Activated CD8-positive, alpha-beta T cell treated with anti-CD3 and anti-CD28 coated beads, Interleukin-2, amount 10 ng/mL, durations not matched to agents 7 days and 5 days (primary cell): ENCODE measurements at regions of chr21 and their contacts with region 1.

Region 1: DNA sequence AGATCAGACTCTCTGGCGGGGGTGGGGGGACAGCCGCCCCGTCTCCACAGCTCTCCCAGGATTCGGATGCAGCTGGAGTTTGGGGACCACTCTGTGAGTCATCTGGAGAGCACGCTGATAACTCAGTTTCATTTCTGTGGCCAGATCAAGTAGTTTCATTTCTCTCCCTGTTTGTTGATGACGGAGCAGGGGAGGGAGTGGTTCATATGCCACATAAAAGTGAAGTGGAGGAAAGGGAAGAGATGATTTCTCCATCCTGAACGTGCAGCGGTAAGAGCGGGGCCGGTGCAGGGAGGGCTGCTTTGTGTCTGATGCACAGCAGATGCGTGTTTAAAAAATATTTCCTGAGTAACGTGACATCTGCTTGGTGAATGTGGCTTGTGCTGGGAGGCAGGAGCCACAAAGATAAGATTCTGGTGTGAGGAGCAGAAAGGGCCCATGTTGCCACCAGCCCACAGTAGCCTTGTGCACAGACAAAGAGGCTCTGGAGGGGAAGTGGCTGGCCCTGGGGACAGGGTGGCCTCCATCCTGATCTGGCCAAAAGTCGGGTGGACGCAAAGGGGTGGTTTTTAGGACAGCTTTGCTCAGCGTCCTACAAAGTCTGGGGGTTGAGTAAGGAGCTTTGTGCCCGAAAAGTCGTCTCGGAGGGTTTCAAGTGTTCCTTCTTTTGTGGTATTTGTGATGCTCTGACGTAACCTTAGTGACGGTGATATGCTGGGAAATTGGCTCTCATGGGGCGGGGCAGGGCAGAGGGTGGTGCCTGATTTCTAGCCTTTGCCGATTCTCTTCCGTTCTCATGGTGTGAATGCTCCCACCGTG is at the start of gene MX2:
- DNase-seq: peak; percentile 91
- ATAC-seq: peak; percentile 84
- H3K4me3 Mint-ChIP-seq: peak within 1 kb of the TSS; percentile 89
- H3K27ac Mint-ChIP-seq: peak within 1 kb of the TSS; percentile 100
- H3K4me1 Mint-ChIP-seq: peaks cover 76% of the 10 kb centered on the region
- H3K27me3 Mint-ChIP-seq: no peaks in the 10 kb centered on the region
- total RNA-seq, gene MX2: 56.0 to 58.6 TPM

Region 2: GRCh38 chr21:41411449-41412089 is 49.6 kb after region 1 on chr21:
- CTCF ChIA-PET with region 1: interaction called, 12 read pairs
- POLR2A ChIA-PET with region 1: interaction called, 4 read pairs
- DNase-seq: no peak
- ATAC-seq: peak; percentile 53
- H3K4me3 Mint-ChIP-seq: no peak overlapping the region
- H3K27ac Mint-ChIP-seq: no peak overlapping the region
- H3K4me1 Mint-ChIP-seq: peaks cover 14% of the 10 kb centered on the region
- H3K27me3 Mint-ChIP-seq: peaks cover 22% of the 10 kb centered on the region

Region 3: GRCh38 chr21:41419911-41420862 is 58.2 kb after region 1 on chr21:
- CTCF ChIA-PET with region 1: interaction called, 3 read pairs
- POLR2A ChIA-PET with region 1: interaction called, 178 read pairs
- DNase-seq: peak; percentile 77
- ATAC-seq: peak; percentile 83
- H3K4me3 Mint-ChIP-seq: peak overlapping the region; percentile 86
- H3K27ac Mint-ChIP-seq: peak overlapping the region; percentile 100
- H3K4me1 Mint-ChIP-seq: peaks cover 71% of the 10 kb centered on the region
- H3K27me3 Mint-ChIP-seq: peaks cover 4% of the 10 kb centered on the region